ENCODE measurements at regions of chr7 and their contacts with region 1.

Region 1: DNA sequence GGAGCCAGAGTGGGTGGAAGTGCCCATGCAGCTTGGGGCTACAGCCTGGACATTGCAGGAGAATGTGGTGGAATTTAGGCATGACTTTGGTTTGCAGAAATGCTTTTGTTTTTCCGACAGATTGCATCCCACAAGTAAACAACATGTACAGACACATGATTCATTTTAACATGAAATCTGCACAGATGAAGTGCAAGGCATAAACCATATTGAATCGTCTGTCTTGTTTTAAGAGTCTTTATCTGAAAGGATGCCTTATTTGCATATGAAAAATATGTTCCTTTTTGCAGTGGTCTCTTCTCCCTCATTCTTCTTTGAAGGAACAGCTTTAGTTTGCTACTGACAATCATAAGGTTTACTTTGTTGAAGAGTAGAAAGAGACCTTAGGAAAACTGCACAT is 94.9 kb downstream of the NXPH1 start:
- DNase-seq: no peak
- H3K4me3 Mint-ChIP-seq: no peak overlapping the region
- H3K27ac Mint-ChIP-seq: no peak overlapping the region
- H3K4me1 Mint-ChIP-seq: no peaks in the 10 kb centered on the region
- H3K27me3 Mint-ChIP-seq: peaks cover 2% of the 10 kb centered on the region

Region 2: DNA sequence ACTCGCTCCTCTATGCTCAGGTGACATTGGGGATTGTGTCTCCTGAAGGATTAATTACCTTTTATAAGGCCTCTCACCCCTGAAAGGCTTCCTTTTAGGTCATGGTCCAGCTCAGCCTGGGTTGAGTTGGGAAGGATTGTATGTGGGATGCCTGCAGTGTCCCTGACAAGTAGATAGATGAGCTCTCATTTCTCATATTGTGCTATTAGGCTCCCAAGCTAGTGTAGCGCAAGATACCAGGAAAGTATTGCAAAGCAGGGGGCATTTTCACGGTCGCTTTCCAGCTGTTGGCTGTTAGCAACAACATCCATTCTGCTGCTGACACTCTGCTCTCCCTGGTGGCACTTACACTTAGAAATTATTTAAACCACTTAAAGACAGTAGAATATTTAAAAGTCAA is 63.0 kb before region 1 on chr7:
- CTCF ChIA-PET with region 1: no interaction called
- intact Hi-C with region 1: loop called (anchors 10 kb)
- DNase-seq: no peak
- H3K4me3 Mint-ChIP-seq: no peak overlapping the region
- H3K27ac Mint-ChIP-seq: no peak overlapping the region
- H3K4me1 Mint-ChIP-seq: no peaks in the 10 kb centered on the region
- H3K27me3 Mint-ChIP-seq: peaks cover 6% of the 10 kb centered on the region